Common myeloid progenitor, CD34-positive (primary cell): ENCODE measurements at regions of chr17 and their contacts with region 1.

Region 1: DNA sequence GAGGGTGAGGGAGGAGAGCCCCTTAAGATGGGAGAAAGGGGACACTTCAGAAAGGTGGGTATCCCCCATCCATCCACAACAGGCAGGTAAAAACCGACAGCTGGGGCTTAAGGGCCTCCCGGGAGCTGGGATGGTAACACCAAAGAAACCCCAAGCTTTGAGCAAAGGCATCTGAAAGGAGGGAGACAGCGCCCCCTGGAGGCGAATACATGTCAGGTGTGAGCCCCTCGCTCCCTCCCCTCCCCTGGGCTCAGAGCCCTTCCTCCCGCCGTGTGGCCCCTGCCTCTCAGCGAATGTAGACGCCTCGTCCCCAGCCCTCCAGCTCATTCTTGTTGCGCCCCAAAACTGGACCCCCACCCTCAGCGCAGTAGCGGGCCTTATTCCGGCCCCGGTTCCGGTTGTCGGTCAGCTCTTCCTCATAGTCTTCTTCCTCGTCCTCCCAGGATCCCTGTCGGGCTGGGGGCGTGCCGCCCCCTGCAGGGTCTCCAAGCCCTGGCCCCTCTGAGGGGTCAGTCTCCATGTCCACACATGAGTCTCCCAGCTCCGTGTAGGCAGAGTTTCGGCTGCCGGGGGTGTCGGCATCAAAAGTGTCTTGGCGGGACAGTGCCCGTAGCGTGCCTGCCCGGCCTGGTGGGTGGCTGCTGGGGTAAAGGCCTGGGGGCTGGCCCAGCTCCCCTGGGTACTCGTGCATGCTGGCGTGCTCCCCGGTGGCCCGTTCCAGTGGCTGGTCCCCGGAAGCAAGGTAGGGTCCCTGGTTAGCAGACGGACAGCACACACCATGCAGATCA is 9.1 kb upstream of the ARL5C start:
- DNase-seq: peak; percentile 83 to 90 (median 87)
- H3K4me3 ChIP-seq: peak overlapping the region in 2 of 7 experiments; percentile 4 to 48
- H3K27ac ChIP-seq: no peak overlapping the region
- H3K4me1 ChIP-seq: peaks cover 4 to 42% (median 30%) of the 10 kb centered on the region in 4 experiments
- H3K27me3 ChIP-seq: no peaks in the 10 kb centered on the region

Region 2: GRCh38 chr17:38982858-38983746 is 192.0 kb before region 1 on chr17:
- CTCF ChIA-PET with region 1: interaction called, 86 read pairs
- POLR2A ChIA-PET with region 1: no interaction called
- DNase-seq: peak; percentile 77 to 88 (median 83)
- H3K4me3 ChIP-seq: no peak overlapping the region
- H3K27ac ChIP-seq: no peak overlapping the region
- H3K4me1 ChIP-seq: no peaks in the 10 kb centered on the region
- H3K27me3 ChIP-seq: peaks cover 0 to 2% (median 0%) of the 10 kb centered on the region in 5 experiments

Region 3: GRCh38 chr17:39069114-39069756 is 105.9 kb before region 1 on chr17:
- CTCF ChIA-PET with region 1: interaction called, 12 read pairs
- POLR2A ChIA-PET with region 1: no interaction called
- DNase-seq: peak; percentile 43 to 81 (median 80)
- H3K4me3 ChIP-seq: no peak overlapping the region
- H3K27ac ChIP-seq: no peak overlapping the region
- H3K4me1 ChIP-seq: peaks cover 0 to 10% (median 3%) of the 10 kb centered on the region in 4 experiments
- H3K27me3 ChIP-seq: peaks cover 0 to 15% (median 0%) of the 10 kb centered on the region in 5 experiments

Region 4: DNA sequence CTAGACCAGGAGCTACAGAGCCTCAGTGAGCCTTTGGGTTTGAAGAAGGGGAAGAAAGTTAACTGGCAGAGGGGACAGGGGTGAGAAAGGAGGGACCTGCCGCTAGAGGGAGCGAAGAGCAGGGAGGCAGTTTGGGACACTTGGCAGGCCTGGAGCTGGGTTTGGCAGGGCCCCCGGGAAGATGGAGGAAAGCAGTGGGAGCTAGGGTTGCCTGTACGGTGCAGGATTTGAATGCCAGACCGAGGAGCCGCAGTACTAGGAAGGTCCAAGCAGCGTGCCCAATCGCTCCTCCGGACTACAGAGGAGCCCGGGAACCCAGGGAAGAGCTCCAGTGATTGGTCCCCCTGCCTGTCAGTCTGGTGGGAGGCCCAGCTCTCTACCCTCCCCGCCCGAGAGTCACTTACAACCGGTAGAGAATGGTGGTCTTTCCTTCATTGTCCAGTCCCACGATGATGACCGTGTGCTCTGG is 10.4 kb before region 1 on chr17:
- CTCF ChIA-PET with region 1: interaction called, 75 read pairs
- POLR2A ChIA-PET with region 1: interaction called, 3 read pairs
- DNase-seq: peak; percentile 87 to 93 (median 90)
- H3K4me3 ChIP-seq: peak overlapping the region; percentile 28 to 98 (median 77)
- H3K27ac ChIP-seq: no peak overlapping the region
- H3K4me1 ChIP-seq: peaks cover 18 to 55% (median 48%) of the 10 kb centered on the region in 4 experiments
- H3K27me3 ChIP-seq: no peaks in the 10 kb centered on the region

Region 5: DNA sequence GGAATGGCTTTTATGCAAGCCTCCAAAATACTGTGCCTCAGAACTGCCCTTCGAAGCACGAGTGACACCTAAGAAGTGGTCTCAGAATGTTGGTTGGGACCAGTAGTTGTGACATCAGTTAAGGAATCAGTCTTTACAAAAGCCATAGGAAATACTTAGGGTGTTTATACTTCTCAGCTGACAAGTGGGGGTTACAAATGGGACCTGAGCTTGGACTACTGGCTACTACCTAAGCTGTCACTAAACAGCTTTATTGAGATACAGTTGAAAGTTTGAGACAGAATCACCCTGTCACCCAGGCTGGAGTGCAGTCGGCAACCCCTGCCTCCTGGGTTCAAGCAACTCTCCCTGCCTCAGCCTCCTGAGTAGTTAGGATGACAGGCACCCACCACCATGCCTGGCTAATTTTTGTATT is 30.0 kb after region 1 on chr17:
- CTCF ChIA-PET with region 1: no interaction called
- POLR2A ChIA-PET with region 1: no interaction called
- DNase-seq: no peak
- H3K4me3 ChIP-seq: no peak overlapping the region
- H3K27ac ChIP-seq: no peak overlapping the region
- H3K4me1 ChIP-seq: peaks cover 0 to 43% (median 37%) of the 10 kb centered on the region in 4 experiments
- H3K27me3 ChIP-seq: no peaks in the 10 kb centered on the region